Heart left ventricle (tissue), 16 donors: ENCODE measurements at regions of chr5 and their contacts with region 1.

Region 1: DNA sequence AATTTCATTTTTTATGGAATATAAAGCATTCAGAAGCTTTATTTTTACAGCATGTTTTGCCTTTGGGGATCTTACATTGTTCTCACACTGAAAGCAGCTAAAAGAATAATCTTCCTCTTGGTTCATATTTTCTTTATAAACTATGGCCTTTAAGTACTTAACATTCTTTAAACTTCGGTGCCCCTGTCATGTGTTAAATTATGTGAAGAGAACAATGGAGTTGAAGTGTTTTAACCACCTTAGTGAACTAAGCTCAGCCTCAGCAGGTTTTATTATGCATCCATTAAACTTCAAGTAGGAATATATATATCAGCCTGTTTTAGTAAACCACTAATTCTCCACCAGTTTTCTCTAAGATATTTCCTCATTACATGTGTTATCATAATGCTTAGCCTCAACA is 371.4 kb upstream of the CDH18 start:
- DNase-seq: no peak
- ATAC-seq: no peak
- H3K4me3 ChIP-seq: no peak overlapping the region
- H3K27ac ChIP-seq: no peak overlapping the region
- H3K4me1 ChIP-seq: no peaks in the 10 kb centered on the region
- H3K27me3 ChIP-seq: no peaks in the 10 kb centered on the region
- CTCF ChIP-seq: no peak
- POLR2A ChIP-seq: no peak

Region 2: DNA sequence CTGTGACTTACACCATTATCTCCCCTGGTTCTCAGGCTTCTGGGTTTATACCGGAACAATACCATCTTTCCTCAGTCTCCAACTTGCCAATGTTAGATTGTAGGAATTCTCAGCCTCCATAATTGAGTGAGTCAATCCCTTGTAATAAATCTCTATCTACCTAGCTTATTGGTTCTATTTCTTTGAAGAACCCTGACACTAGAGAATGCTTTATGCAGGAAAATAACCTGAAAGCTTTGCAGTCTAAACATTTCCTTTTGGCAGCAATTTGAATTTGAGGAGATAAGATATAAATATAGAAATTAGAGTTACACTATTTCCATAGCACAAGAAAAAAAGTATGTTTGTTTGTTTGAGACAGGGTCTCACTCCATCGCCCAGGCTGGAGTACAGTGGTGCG is 93.3 kb before region 1 on chr5:
- intact Hi-C with region 1: loop called in 1 of 10 experiments (anchors 5 kb)
- DNase-seq: no peak
- ATAC-seq: no peak
- H3K4me3 ChIP-seq: no peak overlapping the region
- H3K27ac ChIP-seq: no peak overlapping the region
- H3K4me1 ChIP-seq: no peaks in the 10 kb centered on the region
- H3K27me3 ChIP-seq: no peaks in the 10 kb centered on the region
- CTCF ChIP-seq: no peak
- POLR2A ChIP-seq: no peak